ENCODE measurements at regions of chr20 and their contacts with region 1.

Region 1: GRCh38 chr20:25325073-25325472 is 65.6 kb downstream of the ABHD12 start:
- DNase-seq: no peak
- ATAC-seq: no peak
- H3K4me3 ChIP-seq: no peak overlapping the region
- H3K27ac ChIP-seq: no peak overlapping the region
- H3K4me1 ChIP-seq: peaks cover 19% of the 10 kb centered on the region
- H3K27me3 ChIP-seq: no peaks in the 10 kb centered on the region
- CTCF ChIP-seq: no peak
- POLR2A ChIP-seq: no peak
- RAD21 ChIP-seq: no peak

Region 2: DNA sequence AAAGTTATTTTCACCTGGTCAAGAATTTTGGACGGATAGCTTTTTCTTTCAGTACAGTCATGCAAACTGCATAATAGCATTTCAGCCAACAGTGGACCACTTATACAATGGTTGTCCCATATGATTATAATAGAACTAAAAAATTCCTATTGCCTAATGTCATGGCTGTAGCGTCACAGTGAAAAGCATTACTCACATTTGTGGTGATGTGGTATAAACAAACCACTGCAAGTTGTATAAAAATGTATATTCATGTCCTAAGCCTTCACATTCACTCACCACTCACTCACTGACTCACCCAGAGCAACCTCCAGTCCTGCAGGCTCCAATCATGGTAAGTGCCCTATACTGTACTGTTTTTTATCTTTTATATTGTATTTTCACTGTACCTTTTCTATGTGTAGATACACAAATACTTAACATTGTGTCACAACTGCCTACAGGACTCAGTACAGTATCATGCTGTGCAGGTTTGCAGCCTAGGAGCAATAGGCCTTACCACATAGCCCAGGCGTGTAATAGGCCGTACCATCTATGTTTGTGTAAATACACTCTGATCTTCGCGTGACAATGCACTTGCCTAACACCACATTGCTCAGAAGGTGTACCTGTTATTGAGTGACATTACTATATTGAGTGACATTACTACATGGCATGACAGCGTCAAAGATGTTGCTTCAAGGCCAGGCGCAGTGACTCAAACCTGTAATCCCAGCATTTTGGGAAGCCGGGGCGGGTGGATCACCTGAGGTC is 47.7 kb after region 1 on chr20:
- CTCF ChIA-PET with region 1: no interaction called
- POLR2A ChIA-PET with region 1: no interaction called
- dilution Hi-C with region 1: no loop called
- in situ Hi-C with region 1: loop called (anchors 5 kb)
- intact Hi-C with region 1: no loop called
- DNase-seq: peak; percentile 99
- ATAC-seq: peak; percentile 95
- H3K4me3 ChIP-seq: no peak overlapping the region
- H3K27ac ChIP-seq: peak overlapping the region; percentile 94
- H3K4me1 ChIP-seq: peaks cover 11% of the 10 kb centered on the region
- H3K27me3 ChIP-seq: no peaks in the 10 kb centered on the region
- CTCF ChIP-seq: no peak
- POLR2A ChIP-seq: no peak
- RAD21 ChIP-seq: no peak

Measured in IMR-90 (cell line).